ENCODE measurements at regions of chr20 and their contacts with region 1.

Region 1: GRCh38 chr20:3795511-3796468 is at the start of gene CDC25B:
- DNase-seq: peak; percentile 93
- ATAC-seq: peak; percentile 90 to 96 (median 96)
- H3K4me3 ChIP-seq: peak within 1 kb of the TSS; percentile 47 to 92 (median 70)
- H3K27ac ChIP-seq: peak within 1 kb of the TSS; percentile 89 to 98 (median 96)
- H3K4me1 ChIP-seq: peaks cover 0 to 54% (median 20%) of the 10 kb centered on the region in 9 donors
- H3K27me3 ChIP-seq: no peaks in the 10 kb centered on the region
- CTCF ChIP-seq: peak in 6 of 9 donors; percentile 19 to 44 (median 40)
- total RNA-seq, gene CDC25B: 2.8 to 17.3 (median 5.0) TPM

Region 2: DNA sequence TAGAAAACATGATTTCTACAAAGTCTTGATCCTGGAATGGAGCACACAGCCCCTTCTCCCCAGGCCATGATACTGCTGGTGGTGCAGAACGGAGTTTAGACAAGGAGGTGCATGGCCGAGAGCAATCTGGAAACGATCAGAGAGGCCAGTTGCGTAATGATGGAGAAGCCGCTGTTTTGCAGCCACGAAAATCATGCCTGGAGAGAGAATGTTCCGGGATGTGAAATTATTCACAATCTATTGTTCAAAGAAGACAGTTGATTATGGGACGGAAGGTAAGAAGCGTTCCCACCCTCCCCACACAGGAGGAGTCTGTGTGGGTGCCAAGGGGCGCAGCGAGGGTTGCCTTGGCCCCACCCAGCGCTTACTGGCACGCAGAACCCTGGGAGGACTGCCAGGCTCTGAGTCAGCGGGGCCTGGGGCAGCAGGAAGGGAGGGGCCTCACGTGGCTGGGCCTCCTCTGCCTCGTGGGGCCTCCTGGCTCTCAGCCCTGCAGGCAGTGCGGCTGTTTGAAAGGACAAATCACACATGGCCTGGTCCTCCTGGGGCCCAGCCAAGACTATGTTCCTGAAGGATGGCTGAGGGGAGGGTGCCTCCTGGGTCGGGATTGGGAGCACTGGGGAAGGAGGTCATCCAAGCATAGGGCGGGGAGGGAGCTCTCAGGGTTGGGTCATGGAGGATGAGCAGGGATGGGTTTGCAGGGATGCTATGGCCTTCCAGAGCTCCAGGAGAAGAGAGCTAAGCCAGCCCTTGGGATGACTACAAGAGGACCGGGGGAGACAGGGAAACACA is 15.9 kb after region 1 on chr20:
- intact Hi-C with region 1: loop called in 2 of 10 experiments (anchors 2 kb)
- DNase-seq: peak; percentile 98 to 99
- ATAC-seq: peak; percentile 89 to 96 (median 94)
- H3K4me3 ChIP-seq: peak overlapping the region in 9 of 10 donors; percentile 22 to 57 (median 47)
- H3K27ac ChIP-seq: peak overlapping the region; percentile 72 to 96 (median 92)
- H3K4me1 ChIP-seq: peaks cover 10 to 70% (median 48%) of the 10 kb centered on the region in 9 donors
- H3K27me3 ChIP-seq: no peaks in the 10 kb centered on the region
- CTCF ChIP-seq: no peak

Region 3: DNA sequence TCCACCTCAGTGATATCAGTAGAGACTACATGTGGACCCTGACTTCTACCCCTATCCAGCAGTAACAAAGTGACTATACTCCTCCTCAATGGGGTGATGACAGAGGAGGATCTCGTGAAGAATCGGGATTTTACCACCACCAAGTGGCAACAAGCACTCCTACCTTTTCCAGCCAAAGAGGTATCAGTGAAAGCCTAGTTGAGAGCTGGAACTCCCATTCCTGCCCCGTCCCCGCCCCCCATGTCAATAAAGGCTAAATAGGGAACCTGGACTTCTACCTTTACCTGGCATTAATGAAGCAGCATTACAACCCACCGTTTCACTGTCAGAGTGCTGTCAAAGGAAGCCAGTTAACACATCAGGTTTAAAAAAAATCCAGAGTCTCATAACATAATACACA is 174.2 kb after region 1 on chr20:
- intact Hi-C with region 1: no loop called
- DNase-seq: no peak
- ATAC-seq: peak in 3 of 8 donors; percentile 39 to 64 (median 47)
- H3K4me3 ChIP-seq: no peak overlapping the region
- H3K27ac ChIP-seq: no peak overlapping the region
- H3K4me1 ChIP-seq: peaks cover 0 to 14% (median 0%) of the 10 kb centered on the region in 9 donors
- H3K27me3 ChIP-seq: no peaks in the 10 kb centered on the region
- CTCF ChIP-seq: peak in 2 of 9 donors; percentile 30 to 36

Region 4: GRCh38 chr20:4289875-4290274 is 494.1 kb after region 1 on chr20:
- intact Hi-C with region 1: no loop called
- DNase-seq: no peak
- ATAC-seq: no peak
- H3K4me3 ChIP-seq: no peak overlapping the region
- H3K27ac ChIP-seq: no peak overlapping the region
- H3K4me1 ChIP-seq: no peaks in the 10 kb centered on the region
- H3K27me3 ChIP-seq: no peaks in the 10 kb centered on the region
- CTCF ChIP-seq: peak in 1 of 9 donors; percentile 5